Sciatic nerve (tissue), 2 donors: ENCODE measurements at regions of chrX and their contacts with region 1.

Region 1: GRCh38 chrX:129606918-129607317 is 47.8 kb downstream of the APLN start:
- DNase-seq: peak; percentile 75
- ATAC-seq: peak; percentile 76

Region 2: DNA sequence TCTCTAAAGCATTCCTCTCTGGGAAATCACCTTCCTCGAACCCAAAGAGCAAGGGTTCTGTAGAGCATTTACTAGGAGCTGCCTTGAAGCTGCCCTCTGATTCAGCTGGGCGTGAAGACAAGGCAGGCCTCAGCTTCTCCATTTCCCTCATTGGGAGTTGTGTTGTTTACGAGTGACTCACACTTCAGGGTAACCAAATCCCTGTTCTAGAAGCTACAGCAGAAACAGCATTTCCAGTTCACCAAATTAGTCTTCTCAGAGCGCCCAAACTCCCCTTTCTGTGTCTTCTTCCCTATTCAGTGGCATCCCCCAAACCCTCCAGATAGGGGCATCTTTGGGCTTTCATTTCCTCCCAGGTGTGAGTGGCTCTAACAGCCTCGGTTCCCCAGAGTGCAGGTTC is 131.0 kb after region 1 on chrX:
- intact Hi-C with region 1: loop called (anchors 10 kb)
- DNase-seq: no peak
- ATAC-seq: peak; percentile 69